Right ventricle myocardium superior (tissue), 1 donor: ENCODE measurements at regions of chrX and their contacts with region 1.

Region 1: GRCh38 chrX:103817502-103817901 is 14.6 kb downstream of the RAB9B start:
- DNase-seq: no peak
- ATAC-seq: no peak

Region 2: GRCh38 chrX:103276539-103277002 is 540.9 kb before region 1 on chrX and contains the start of gene TCEAL5:
- intact Hi-C with region 1: no loop called
- DNase-seq: no peak
- ATAC-seq: no peak
- total RNA-seq, gene TCEAL5: 0.32 TPM

Region 3: GRCh38 chrX:103704863-103705262 is 112.6 kb before region 1 on chrX:
- intact Hi-C with region 1: loop called (anchors 10 kb)
- DNase-seq: no peak
- ATAC-seq: no peak